Activated B cell treated with CpG ODN at 0.5 μM for 24 hours (primary cell): ENCODE measurements at regions of chr7 and their contacts with region 1.

Region 1: GRCh38 chr7:3042861-3043489 is 692 bp downstream of the CARD11 start:
- DNase-seq: peak; percentile 66
- ATAC-seq: peak; percentile 65
- H3K4me3 Mint-ChIP-seq: peak overlapping the region; percentile 97
- H3K27ac Mint-ChIP-seq: peak overlapping the region; percentile 96
- H3K4me1 Mint-ChIP-seq: peaks cover 49% of the 10 kb centered on the region
- H3K27me3 Mint-ChIP-seq: no peaks in the 10 kb centered on the region
- CTCF ChIP-seq: no peak

Region 2: GRCh38 chr7:2232766-2233520 is 810.0 kb before region 1 on chr7 and contains the start of gene MAD1L1:
- CTCF ChIA-PET with region 1: no interaction called
- POLR2A ChIA-PET with region 1: no interaction called
- intact Hi-C with region 1: loop called (anchors 10 kb)
- DNase-seq: peak; percentile 88
- ATAC-seq: peak; percentile 68
- H3K4me3 Mint-ChIP-seq: peak within 1 kb of the TSS; percentile 90
- H3K27ac Mint-ChIP-seq: peak within 1 kb of the TSS; percentile 81
- H3K4me1 Mint-ChIP-seq: peaks cover 61% of the 10 kb centered on the region
- H3K27me3 Mint-ChIP-seq: no peaks in the 10 kb centered on the region
- CTCF ChIP-seq: no peak
- total RNA-seq, gene MAD1L1: 54.6 and 65.7 TPM in 2 replicates

Region 3: GRCh38 chr7:2886900-2887299 is 156.1 kb before region 1 on chr7:
- CTCF ChIA-PET with region 1: no interaction called
- POLR2A ChIA-PET with region 1: no interaction called
- intact Hi-C with region 1: loop called (anchors 1 kb)
- DNase-seq: no peak
- ATAC-seq: peak; percentile 88
- H3K4me3 Mint-ChIP-seq: no peak overlapping the region
- H3K27ac Mint-ChIP-seq: no peak overlapping the region
- H3K4me1 Mint-ChIP-seq: peaks cover 7% of the 10 kb centered on the region
- H3K27me3 Mint-ChIP-seq: no peaks in the 10 kb centered on the region
- CTCF ChIP-seq: no peak

Region 4: DNA sequence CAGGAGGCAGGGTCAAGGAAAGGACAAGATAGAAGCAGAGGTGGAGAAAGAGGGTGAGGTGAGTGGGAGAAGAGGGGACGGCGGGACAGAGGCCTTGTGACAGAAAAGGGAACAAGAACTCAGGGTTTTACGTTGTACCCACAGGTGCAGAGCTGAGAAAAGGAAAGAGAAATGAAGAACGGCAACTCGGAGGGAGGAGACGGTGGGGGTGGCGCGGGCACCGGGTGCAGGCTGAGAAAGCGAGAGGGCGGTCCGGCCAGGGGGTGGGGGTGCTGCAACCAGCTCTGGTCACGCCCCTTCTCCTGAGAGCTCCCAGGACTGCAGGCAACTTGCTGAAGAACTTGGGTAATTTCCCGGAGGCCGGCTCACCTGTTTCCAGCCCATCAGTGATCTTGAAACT is 64.6 kb before region 1 on chr7:
- CTCF ChIA-PET with region 1: interaction called, 4 read pairs
- POLR2A ChIA-PET with region 1: interaction called, 28 read pairs
- intact Hi-C with region 1: loop called (anchors 1 kb)
- DNase-seq: peak; percentile 82
- ATAC-seq: peak; percentile 84
- H3K4me3 Mint-ChIP-seq: peak overlapping the region; percentile 83
- H3K27ac Mint-ChIP-seq: peak overlapping the region; percentile 95
- H3K4me1 Mint-ChIP-seq: peaks cover 83% of the 10 kb centered on the region
- H3K27me3 Mint-ChIP-seq: no peaks in the 10 kb centered on the region
- CTCF ChIP-seq: no peak

Region 5: GRCh38 chr7:3065724-3066143 is 22.8 kb after region 1 on chr7:
- CTCF ChIA-PET with region 1: interaction called, 11 read pairs
- POLR2A ChIA-PET with region 1: interaction called, 27 read pairs
- intact Hi-C with region 1: loop called (anchors 1 kb)
- DNase-seq: peak; percentile 58
- ATAC-seq: peak; percentile 40
- H3K4me3 Mint-ChIP-seq: peak overlapping the region; percentile 68
- H3K27ac Mint-ChIP-seq: peak overlapping the region; percentile 61
- H3K4me1 Mint-ChIP-seq: peaks cover 67% of the 10 kb centered on the region
- H3K27me3 Mint-ChIP-seq: no peaks in the 10 kb centered on the region
- CTCF ChIP-seq: no peak

Region 6: DNA sequence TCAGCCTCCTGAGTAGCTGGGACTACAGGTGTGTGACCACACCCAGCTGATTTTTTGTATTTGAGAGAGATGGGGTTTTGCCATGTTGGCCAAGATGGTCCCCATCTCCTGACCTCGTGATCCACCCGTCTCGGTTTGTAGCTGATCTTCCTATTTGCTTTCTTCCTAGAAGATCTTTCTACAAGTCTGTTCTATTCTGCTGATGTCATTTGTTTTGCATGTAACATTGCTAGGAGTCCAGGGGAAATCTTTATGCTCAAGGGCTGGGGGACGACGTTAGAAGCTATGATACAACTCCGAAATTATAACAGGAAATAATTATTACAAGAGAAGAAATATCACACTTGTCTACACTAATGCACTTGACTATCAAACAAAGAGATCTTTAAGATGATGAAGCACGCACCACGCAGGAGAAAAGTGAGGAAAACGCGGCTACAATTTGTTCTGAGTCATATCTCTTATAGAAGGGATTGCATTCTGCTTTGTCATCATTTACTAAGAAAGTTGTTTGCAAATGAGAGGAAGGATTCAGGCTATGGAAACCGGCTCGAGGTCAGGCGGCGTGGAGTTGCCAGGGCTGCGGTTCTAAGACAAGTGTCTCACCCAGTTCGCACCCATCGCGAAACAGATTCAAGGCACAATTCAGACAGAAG is 103.7 kb after region 1 on chr7:
- CTCF ChIA-PET with region 1: no interaction called
- POLR2A ChIA-PET with region 1: interaction called, 10 read pairs
- intact Hi-C with region 1: no loop called
- DNase-seq: no peak
- ATAC-seq: no peak
- H3K4me3 Mint-ChIP-seq: no peak overlapping the region
- H3K27ac Mint-ChIP-seq: no peak overlapping the region
- H3K4me1 Mint-ChIP-seq: peaks cover 23% of the 10 kb centered on the region
- H3K27me3 Mint-ChIP-seq: peaks cover 3% of the 10 kb centered on the region
- CTCF ChIP-seq: no peak

Region 7: DNA sequence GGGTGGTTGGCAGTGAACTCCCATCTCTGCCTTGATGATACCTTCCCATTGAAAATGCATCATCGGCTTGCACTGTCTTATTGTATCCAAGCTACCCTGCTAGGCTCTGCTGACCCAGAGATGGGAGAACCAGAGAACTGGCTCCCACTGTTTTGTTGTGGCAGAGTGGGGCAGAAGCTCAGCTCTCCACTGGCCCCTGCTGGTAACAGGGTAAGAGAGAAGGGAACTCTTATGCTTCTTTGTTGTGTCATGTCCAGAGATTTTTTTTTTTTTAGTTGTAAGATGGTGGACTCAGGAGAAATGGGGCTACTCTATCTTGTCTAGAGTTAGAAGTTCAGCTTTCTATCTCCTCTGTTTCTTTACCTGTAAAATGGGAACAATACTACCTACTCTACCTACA is 157.5 kb after region 1 on chr7:
- CTCF ChIA-PET with region 1: no interaction called
- POLR2A ChIA-PET with region 1: no interaction called
- intact Hi-C with region 1: no loop called
- DNase-seq: no peak
- ATAC-seq: no peak
- H3K4me3 Mint-ChIP-seq: no peak overlapping the region
- H3K27ac Mint-ChIP-seq: no peak overlapping the region
- H3K4me1 Mint-ChIP-seq: peaks cover 4% of the 10 kb centered on the region
- H3K27me3 Mint-ChIP-seq: peaks cover 2% of the 10 kb centered on the region
- CTCF ChIP-seq: no peak